AG04449 (cell line): ENCODE measurements at regions of chr3 and their contacts with region 1.

Region 1: GRCh38 chr3:187164885-187165543 is 25.7 kb upstream of the RPL39L start:
- DNase-seq: no peak
- H3K4me3 ChIP-seq: no peak overlapping the region
- CTCF ChIP-seq: peak; percentile 49

Region 2: GRCh38 chr3:187101184-187102072 is 63.6 kb before region 1 on chr3:
- CTCF ChIA-PET with region 1: interaction called, 13 read pairs
- POLR2A ChIA-PET with region 1: no interaction called
- DNase-seq: no peak
- H3K4me3 ChIP-seq: peak overlapping the region; percentile 43
- CTCF ChIP-seq: no peak

Region 3: DNA sequence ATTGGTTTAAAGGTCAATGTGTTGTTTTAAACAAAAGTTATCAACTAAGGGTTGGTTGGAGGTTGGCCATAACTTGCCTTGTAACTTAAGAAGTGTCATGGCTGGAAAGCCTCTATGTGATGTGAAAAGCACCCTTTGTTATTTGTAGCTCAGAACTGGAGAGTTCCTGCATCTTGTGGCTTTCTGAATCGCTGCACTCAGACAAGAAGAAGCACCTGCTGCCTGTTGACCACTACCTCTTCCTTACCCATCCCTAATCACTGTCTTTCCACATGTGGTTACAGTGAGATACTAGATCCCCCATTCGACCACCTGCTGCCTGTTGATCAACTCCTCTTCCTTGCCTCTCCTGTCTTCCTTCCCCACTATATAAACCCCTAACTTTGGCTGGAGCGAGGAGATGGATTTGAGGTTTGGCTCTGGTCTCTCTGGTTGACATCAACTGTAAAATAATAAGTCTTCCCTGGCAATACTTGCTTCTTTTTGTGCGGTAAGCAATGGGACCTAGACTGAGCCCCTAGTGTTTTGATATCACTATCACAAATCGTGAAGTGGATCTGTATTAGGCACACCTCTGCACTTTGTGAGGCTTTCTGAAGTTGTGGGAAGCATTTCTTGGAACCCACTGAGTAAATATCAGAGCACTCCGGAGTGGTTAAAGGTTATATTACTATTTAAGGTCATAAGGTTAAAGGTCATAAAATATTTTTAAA is 39.5 kb before region 1 on chr3:
- CTCF ChIA-PET with region 1: interaction called, 14 read pairs
- POLR2A ChIA-PET with region 1: no interaction called
- DNase-seq: no peak
- H3K4me3 ChIP-seq: no peak overlapping the region
- CTCF ChIP-seq: no peak

Region 4: GRCh38 chr3:187150599-187150998 is 14.4 kb before region 1 on chr3:
- CTCF ChIA-PET with region 1: interaction called, 21 read pairs
- POLR2A ChIA-PET with region 1: no interaction called
- DNase-seq: no peak
- H3K4me3 ChIP-seq: no peak overlapping the region
- CTCF ChIP-seq: no peak

Region 5: DNA sequence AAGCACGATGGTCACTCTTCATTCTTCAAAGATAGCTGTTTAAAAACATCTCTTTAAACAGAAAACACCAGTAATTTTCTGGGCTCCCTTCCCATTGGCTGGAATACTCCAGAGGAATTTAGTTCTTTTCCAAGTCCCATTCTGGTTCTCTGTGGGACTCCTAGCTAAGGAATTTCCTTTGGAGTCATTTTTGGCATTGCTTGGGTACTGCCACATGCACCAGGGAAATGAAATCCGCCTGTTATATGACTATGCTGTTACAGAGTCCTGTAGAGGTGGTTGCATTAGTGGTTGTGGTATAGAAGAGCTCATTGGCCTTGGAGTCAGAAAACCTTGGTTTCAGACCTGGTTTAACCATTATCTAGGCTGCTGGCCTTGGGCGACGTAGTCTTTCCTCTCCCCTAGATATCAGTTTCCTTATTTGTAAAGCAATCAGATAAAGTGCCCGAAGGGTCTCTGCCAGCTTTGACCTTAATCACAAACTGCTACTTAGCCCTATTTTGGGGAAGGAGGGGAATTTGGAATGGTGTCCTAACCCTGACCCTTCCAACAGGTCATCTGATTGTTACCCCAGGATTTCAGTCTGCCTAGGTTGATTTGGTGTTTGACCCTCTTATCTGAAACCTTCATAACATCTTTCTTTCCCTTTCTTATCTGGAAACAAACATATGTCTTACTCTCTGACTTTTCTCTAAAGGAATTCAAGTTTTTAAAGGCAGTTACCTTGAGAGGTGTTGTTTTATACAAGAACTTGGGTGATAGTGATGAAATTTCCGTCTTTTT is 45.7 kb after region 1 on chr3:
- CTCF ChIA-PET with region 1: interaction called, 23 read pairs
- POLR2A ChIA-PET with region 1: no interaction called
- DNase-seq: peak; percentile 45
- H3K4me3 ChIP-seq: no peak overlapping the region
- CTCF ChIP-seq: no peak